ENCODE measurements at regions of chr1 and their contacts with region 1.

Region 1: DNA sequence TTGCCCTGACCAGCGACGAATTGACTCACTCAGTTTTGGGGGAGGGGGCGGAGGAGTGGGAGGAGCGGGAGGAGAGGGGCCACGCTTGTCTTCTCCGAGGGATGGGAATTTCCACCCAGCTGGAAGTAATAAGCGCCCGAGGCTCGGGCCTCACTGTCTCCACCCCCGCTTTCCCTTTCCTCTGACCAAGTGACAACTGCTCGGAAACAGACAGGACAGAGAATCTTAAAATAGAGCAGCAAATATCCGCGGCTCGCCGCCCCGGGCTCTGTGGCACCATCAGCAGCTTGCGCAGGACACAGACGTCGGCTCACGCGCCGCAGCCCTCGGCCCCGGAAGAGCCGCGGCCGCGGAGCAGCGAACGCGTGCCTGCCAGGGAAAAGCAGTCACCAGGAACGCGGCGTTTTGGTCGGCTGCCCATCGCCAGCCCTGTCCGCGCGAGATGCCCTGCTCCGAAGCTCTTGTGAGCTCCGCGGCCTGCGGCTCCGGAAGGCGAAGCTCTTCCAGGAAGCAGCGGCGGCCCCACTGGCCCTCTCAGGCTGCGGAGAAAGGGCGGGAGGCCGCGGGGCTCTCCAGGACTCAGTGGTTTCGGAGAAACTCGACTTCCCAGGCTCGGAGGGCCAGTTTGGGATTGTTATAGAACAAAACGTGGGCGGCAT is 10.7 kb upstream of the RGS16 start:
- DNase-seq: peak; percentile 72
- H3K4me3 Mint-ChIP-seq: peak overlapping the region; percentile 73
- H3K27ac Mint-ChIP-seq: peak overlapping the region; percentile 84
- H3K4me1 Mint-ChIP-seq: peaks cover 56% of the 10 kb centered on the region
- H3K27me3 Mint-ChIP-seq: peaks cover 5% of the 10 kb centered on the region

Region 2: DNA sequence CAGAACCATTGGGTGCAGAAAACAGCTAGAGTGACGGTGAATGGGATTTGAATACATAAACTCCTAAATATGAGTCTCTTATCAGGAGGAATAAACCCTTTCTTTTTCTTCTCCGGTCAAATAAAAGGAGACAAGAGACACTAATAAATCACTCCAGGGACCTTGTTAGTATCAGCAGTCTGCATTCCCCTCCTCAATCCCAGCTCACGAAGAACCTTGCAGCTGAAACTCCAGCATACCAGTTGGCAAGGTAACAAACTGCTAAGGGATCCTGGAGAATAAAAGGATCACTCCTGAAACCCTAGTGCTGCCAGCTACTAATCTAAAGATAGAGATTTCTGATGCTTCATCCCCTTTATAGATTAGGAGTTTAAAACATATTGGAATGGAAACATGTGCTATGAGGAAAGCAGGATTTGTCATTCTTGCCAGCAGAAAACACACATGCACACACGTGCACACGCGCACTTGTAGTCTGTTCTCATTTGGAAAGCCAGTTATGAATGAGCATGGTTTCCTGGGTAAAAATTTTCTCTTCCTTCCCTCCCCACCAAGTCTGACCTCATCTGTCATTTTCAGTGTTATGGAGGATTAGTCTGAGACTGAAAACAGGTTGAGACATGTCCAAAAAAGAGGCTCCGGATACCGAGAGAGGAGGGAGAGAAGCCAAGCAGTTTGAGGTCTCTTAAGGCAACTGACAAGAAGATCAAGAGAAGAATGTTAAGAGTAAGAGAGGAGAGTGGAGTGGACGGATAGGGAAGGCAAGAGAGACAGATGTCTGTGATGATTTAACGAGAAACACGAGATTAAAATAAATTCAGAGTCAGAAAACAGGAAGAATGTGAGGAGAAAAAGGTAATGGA is 1515.5 kb before region 1 on chr1:
- CTCF ChIA-PET with region 1: no interaction called
- intact Hi-C with region 1: loop called (anchors 2 kb)
- DNase-seq: peak; percentile 80
- H3K4me3 Mint-ChIP-seq: peak overlapping the region; percentile 67
- H3K27ac Mint-ChIP-seq: peak overlapping the region; percentile 99
- H3K4me1 Mint-ChIP-seq: peaks cover 88% of the 10 kb centered on the region
- H3K27me3 Mint-ChIP-seq: no peaks in the 10 kb centered on the region

Region 3: DNA sequence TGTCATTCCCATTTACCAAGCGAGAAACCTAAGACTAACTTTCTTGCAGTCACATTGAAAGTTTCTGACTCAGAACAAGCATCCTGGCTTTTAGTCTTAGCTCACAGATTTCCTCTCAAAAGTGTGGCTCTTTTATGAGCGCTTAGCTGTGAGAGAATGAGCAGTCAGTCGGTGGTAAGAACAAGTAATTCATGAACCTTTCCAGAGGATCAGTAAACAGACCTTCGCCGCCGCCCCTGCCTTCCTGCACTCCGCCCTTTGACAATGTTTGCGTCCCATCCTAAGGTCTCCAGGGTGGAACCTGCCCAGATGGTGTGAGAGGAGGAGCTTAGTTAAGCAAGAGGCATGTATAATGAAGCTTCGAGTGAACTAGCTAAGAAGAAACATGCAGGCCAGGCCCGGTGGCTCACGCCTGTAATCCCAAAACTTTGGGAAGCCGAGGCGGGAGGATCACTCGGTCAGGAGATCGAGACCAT is 365.7 kb before region 1 on chr1:
- CTCF ChIA-PET with region 1: no interaction called
- intact Hi-C with region 1: loop called (anchors 5 kb)
- DNase-seq: peak; percentile 83
- H3K4me3 Mint-ChIP-seq: no peak overlapping the region
- H3K27ac Mint-ChIP-seq: peak overlapping the region; percentile 75
- H3K4me1 Mint-ChIP-seq: peaks cover 24% of the 10 kb centered on the region
- H3K27me3 Mint-ChIP-seq: no peaks in the 10 kb centered on the region

Region 4: DNA sequence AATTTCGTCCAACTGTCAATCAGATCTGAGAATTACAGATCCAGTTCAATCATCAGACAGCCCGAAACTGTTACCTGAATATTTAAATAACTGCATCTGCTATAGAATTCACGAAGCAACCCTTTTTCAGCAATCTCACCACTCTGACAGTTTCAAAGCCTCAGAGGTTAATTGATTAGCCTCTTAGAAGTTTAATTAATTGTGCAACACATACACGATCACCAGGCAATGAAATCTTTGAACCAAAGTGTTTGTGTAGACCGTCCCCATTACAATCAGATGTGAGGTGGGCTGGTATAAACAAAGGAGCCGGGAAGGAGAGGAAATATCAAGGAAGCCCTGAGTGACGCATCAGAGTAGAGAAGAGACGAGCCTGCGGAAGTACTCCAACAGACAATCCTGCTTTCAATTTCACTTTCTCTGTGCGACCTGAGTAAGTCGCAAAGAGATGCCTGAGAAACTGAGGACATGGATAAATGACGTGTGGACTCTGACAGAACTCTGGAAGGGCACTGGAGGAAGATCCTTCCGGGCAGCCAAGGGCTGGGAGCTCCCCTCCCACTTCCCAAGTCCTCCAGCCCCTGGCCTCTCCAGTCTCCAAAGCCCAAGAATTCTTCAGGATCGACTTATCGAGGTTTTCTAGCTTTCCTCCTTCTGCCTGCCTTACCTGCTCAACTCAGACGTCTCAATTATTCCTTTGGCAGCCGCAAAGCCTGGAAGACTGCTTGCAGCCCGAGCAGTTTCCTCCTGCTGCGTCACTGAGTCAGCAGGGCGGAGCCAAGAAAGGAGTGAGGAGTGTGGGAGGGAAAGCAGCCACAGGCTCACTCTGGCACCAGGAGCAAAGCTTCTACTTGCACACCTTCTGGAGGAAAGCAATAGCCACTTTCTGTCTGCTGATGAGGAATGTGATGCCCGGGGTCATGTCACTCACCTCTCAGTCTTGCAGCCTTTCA is 26.1 kb before region 1 on chr1 and contains the start of gene RNASEL:
- CTCF ChIA-PET with region 1: interaction called, 3 read pairs
- intact Hi-C with region 1: loop called (anchors 1 kb)
- DNase-seq: peak; percentile 62
- H3K4me3 Mint-ChIP-seq: peak within 1 kb of the TSS; percentile 86
- H3K27ac Mint-ChIP-seq: peak within 1 kb of the TSS; percentile 98
- H3K4me1 Mint-ChIP-seq: peaks cover 49% of the 10 kb centered on the region
- H3K27me3 Mint-ChIP-seq: no peaks in the 10 kb centered on the region
- total RNA-seq, gene RNASEL: 2.5 TPM

Region 5: GRCh38 chr1:182629499-182630096 is 14.7 kb after region 1 on chr1:
- CTCF ChIA-PET with region 1: interaction called, 4 read pairs
- intact Hi-C with region 1: loop called (anchors 1 kb)
- DNase-seq: peak; percentile 68
- H3K4me3 Mint-ChIP-seq: no peak overlapping the region
- H3K27ac Mint-ChIP-seq: peak overlapping the region; percentile 51
- H3K4me1 Mint-ChIP-seq: peaks cover 57% of the 10 kb centered on the region
- H3K27me3 Mint-ChIP-seq: no peaks in the 10 kb centered on the region

Region 6: DNA sequence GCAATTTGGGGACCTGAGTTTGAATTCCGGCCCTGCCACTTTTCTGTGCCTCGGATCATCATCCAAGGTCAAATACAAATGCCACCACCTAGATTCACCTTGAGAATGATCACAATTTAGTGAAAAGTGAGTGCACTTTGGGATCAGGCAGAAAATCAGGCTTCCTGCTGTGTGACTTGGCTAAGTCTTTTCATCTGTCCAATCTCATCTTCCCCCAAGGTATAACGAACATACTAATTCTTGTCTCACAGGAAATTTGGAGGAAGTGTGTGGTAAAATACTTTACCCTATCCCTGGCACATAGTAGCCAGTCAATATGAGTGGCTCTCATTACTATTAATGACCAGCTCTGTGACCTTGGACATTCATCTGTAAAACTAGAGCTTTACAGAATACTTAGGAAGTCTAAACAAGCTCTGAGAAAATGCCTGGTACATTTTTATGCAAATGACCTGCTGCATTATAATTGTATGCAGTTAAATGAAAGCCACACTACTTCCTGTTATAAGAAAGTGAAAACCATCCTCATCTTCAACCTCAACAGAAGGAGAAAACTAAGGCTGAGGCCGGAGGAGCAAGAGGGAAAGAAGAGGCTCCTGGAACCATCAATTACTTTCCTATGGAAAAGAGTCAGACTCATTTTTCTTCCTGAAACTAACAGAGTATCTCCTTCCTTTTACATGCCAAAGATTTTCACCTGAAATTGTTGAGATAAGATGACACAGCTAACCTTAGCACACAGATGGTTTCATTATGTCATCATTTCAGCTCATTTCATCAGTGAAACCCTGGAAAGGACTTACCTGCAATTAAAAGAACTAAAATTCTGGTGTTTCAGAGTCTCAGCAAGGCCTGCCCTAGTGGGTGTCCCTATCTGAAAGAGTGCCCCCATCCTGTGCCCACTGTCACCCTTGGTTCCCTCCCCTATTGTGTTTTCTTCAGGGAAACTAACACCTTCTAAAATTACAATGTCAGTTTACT is 102.1 kb after region 1 on chr1:
- CTCF ChIA-PET with region 1: interaction called, 3 read pairs
- intact Hi-C with region 1: loop called (anchors 1 kb)
- DNase-seq: no peak
- H3K4me3 Mint-ChIP-seq: no peak overlapping the region
- H3K27ac Mint-ChIP-seq: no peak overlapping the region
- H3K4me1 Mint-ChIP-seq: peaks cover 40% of the 10 kb centered on the region
- H3K27me3 Mint-ChIP-seq: no peaks in the 10 kb centered on the region

Region 7: GRCh38 chr1:182781841-182782586 is 167.1 kb after region 1 on chr1:
- CTCF ChIA-PET with region 1: interaction called, 9 read pairs
- intact Hi-C with region 1: loop called (anchors 1 kb)
- DNase-seq: peak; percentile 89
- H3K4me3 Mint-ChIP-seq: no peak overlapping the region
- H3K27ac Mint-ChIP-seq: no peak overlapping the region
- H3K4me1 Mint-ChIP-seq: peaks cover 18% of the 10 kb centered on the region
- H3K27me3 Mint-ChIP-seq: no peaks in the 10 kb centered on the region

Measured in activated naive CD4-positive, alpha-beta T cell treated with anti-CD3 and anti-CD28 coated beads for 36 hours (primary cell).